Gastrocnemius medialis (tissue), 4 donors: ENCODE measurements at regions of chr16 and their contacts with region 1.

Region 1: DNA sequence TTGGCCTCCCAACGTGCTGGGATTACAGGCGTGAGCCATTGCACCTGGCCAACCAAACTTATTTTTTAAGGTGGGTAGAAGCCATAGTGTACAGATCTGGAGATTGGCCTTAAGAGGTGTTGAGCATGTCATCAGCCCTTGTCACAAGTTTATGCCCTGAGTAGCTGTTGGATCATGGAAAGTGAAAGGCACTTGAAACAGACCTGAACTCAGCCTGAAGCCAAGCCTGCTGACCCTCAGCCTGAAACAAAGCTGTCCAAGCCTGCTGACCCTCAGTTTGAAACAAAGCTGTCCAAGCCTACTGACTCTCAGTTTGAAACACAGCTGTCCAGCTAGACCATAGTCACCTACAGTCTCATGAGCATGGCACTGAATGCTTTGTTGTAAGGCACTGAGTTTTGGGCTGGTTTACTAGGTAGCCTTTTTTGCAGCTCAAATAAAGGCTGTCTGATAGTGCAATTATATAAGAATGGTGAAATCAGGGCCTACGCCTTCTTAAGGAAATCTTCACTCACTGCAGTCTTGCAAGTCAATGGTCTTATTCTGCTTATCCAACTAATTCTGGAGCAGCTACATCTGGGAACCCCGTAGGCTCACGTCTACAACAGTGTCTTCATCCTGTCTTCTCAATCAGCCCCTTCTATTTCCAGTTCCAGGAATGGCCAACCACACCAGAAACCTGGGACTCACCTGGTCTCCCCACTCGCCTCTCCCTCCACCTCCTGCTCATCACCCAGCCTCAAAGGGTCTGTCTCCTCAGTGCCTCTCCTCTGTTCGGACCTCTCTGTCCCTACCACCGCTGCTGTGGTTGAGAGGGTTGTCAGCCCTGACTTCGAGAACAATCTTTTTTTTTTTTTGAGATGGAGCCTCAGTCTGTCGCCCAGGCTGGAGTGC is 2.9 kb upstream of the NPIPB15 start:
- DNase-seq: no peak
- ATAC-seq: no peak
- H3K4me3 ChIP-seq: no peak overlapping the region
- H3K27ac ChIP-seq: no peak overlapping the region
- H3K4me1 ChIP-seq: peaks cover 0 to 7% of the 10 kb centered on the region in 2 donors
- H3K27me3 ChIP-seq: no peaks in the 10 kb centered on the region
- CTCF ChIP-seq: no peak
- POLR2A ChIP-seq: no peak

Region 2: GRCh38 chr16:74296432-74297144 is 76.6 kb before region 1 on chr16 and contains the start of gene PSMD7:
- in situ Hi-C with region 1: loop called in 1 of 4 experiments (anchors 10 kb)
- intact Hi-C with region 1: loop called (anchors 2 kb)
- DNase-seq: peak; percentile 86 to 89
- ATAC-seq: peak; percentile 96 to 97
- H3K4me3 ChIP-seq: peak within 1 kb of the TSS; percentile 76 to 96 (median 91)
- H3K27ac ChIP-seq: peak within 1 kb of the TSS; percentile 94 to 98 (median 95)
- H3K4me1 ChIP-seq: peaks cover 15 to 41% of the 10 kb centered on the region in 2 donors
- H3K27me3 ChIP-seq: no peaks in the 10 kb centered on the region
- CTCF ChIP-seq: no peak
- POLR2A ChIP-seq: peak; percentile 87 to 95
- total RNA-seq, gene PSMD7: 190 to 267 (median 224) TPM

Region 3: DNA sequence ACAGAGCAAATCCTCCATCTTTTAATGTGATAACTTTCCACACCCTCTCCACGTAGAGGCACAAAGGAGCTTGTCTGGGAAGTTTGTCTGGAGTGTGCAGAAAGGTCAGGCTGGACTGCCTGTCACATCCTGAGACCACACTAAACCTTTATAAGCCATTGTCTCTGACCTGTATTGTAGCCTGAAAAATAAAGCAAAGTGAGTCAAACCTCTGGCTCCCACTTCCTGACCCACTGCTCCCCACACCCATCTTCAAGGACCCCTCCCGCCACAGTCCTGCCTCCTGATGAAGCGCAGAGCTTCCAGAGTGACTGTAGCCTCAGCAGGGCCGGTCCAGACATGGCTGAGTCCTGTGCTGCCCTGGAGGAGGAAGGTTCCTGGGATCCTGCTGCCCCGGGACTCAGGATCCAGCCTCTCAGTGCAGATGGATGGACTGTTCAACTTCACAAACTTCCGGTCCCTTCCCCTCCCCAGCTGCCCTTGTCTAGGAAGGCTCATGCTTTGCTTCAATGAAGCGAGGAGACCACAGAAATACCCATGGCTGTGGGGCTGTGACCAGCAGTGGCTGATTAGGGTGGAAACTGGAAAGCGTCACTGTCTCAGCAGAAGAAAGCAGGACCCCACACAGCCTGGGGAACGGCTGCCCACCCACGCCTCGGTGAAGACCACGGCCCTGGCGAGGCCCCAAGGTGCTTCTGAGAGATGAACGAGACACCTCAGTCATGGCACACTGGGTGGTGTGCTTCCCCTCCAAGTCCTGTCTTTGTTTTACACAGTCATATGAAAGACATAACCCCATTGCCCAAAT is 79.0 kb after region 1 on chr16:
- in situ Hi-C with region 1: loop called in 1 of 4 experiments (anchors 25 kb)
- intact Hi-C with region 1: no loop called
- DNase-seq: no peak
- ATAC-seq: no peak
- H3K4me3 ChIP-seq: no peak overlapping the region
- H3K27ac ChIP-seq: no peak overlapping the region
- H3K4me1 ChIP-seq: peaks cover 12 to 15% of the 10 kb centered on the region in 2 donors
- H3K27me3 ChIP-seq: no peaks in the 10 kb centered on the region
- CTCF ChIP-seq: no peak
- POLR2A ChIP-seq: no peak

Region 4: GRCh38 chr16:74501484-74502479 is 128.6 kb after region 1 on chr16:
- in situ Hi-C with region 1: no loop called
- intact Hi-C with region 1: no loop called
- DNase-seq: no peak
- ATAC-seq: peak in 1 of 2 donors; percentile 39
- H3K4me3 ChIP-seq: no peak overlapping the region
- H3K27ac ChIP-seq: peak overlapping the region; percentile 22 to 39 (median 33)
- H3K4me1 ChIP-seq: peaks cover 18 to 22% of the 10 kb centered on the region in 2 donors
- H3K27me3 ChIP-seq: no peaks in the 10 kb centered on the region
- CTCF ChIP-seq: no peak
- POLR2A ChIP-seq: no peak